OCI-LY7 (cell line): ENCODE measurements at regions of chr21 and their contacts with region 1.

Region 1: DNA sequence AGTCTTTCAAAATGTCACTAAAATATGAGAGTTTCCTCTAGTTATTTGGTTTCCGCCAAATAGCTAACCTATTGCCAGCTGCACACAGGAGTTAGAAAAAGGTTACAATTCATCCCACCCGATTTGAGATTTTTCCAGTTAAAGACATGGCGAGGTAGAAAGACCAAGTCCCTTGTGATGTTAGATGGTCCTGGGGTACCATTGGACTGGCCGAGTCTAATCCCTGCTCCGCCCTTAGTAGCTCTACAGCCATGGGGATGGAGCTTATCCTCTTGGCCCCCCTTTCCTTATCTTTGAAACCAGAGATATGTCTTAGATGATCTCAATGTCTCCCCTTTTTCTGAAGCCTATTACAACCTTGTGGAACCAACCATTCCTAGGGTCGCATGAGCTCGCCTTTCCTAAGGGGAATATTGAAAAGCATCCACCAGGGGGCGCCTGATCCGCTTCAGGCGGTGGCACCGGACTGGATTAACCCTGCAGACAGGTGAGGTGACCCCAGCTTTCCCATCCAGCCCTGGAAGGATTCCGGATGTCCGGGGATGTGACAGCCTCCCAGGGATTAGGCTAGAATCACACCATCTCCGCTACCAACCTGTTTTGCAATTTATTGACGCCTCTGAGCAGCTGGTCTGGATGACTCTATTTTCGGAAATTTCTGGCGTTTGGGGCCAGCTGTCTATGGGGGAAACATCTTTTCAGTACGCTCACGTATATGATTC is 68.3 kb upstream of the SIM2 start:
- DNase-seq: peak; percentile 68
- H3K4me3 ChIP-seq: no peak overlapping the region
- H3K27ac ChIP-seq: no peak overlapping the region
- H3K4me1 ChIP-seq: no peaks in the 10 kb centered on the region
- CTCF ChIP-seq: peak; percentile 92

Region 2: DNA sequence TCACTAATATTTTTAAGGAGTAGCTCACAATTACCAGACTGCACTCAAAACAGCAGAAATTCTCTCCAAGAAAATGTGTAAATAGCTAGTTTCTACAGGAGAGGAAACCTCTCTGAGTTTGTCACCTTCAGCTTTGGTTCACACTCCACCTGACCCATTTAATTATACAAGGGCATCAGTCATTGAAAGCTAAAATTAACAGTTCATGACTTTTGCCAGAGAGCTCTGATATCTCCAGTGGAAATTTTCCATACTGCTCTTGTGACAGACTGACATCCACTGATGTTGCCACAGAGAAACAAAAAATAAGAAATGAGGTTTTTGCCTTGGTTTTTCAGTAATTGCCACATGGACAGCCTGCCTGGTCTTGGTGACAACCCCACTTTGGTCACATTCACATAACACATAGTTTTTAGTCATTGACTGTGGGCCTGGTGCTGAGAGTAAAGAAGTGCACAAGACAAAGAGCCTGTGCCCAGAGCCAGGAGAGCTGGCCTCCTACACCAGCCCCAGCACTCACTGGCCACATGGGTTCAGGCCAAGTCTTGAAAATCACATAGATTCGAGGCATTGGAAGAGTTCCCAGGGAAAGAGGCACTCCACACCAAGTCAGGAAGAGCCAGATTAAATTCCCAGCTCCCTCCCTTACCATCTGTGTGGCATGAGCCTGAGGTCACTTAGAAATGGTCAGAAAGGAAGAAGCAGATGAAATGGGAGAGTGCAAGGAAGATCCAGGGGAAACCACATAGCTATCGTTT is 54.5 kb after region 1 on chr21:
- CTCF ChIA-PET with region 1: no interaction called
- POLR2A ChIA-PET with region 1: no interaction called
- intact Hi-C with region 1: no loop called
- DNase-seq: no peak
- H3K4me3 ChIP-seq: no peak overlapping the region
- H3K27ac ChIP-seq: no peak overlapping the region
- H3K4me1 ChIP-seq: no peaks in the 10 kb centered on the region
- CTCF ChIP-seq: no peak

Region 3: GRCh38 chr21:36854391-36854790 is 223.7 kb after region 1 on chr21:
- CTCF ChIA-PET with region 1: no interaction called
- POLR2A ChIA-PET with region 1: no interaction called
- intact Hi-C with region 1: loop called (anchors 1 kb)
- DNase-seq: peak; percentile 63
- H3K4me3 ChIP-seq: no peak overlapping the region
- H3K27ac ChIP-seq: no peak overlapping the region
- H3K4me1 ChIP-seq: no peaks in the 10 kb centered on the region
- CTCF ChIP-seq: peak; percentile 85